T-cell (primary cell): ENCODE measurements at regions of chr4 and their contacts with region 1.

Region 1: DNA sequence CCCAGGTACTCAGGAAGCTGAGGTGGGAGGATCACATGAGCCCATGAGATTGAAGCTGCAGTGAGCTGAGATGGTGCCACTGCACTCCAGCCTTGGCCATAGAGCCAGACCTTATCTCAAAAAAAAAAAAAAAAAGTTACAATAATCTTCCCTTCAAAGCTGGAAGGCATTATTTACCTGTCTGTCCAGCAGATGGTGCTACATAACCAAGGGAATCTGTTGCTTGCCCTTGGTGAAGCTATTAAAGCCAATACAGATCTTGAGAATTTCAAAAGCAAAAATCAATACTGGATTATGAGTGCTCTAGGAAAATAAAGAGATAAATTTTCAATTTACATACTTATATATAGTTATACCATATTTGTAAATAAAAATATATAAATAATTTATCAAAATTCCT is 25.9 kb downstream of the PKD2 start:
- DNase-seq: peak in 19 of 35 experiments; percentile 4 to 70 (median 15)
- ATAC-seq: peak in 2 of 4 experiments; percentile 38
- H3K4me3 ChIP-seq: no peak overlapping the region
- H3K4me3 Mint-ChIP-seq: no peak overlapping the region
- H3K27ac ChIP-seq: no peak overlapping the region
- H3K27ac Mint-ChIP-seq: no peak overlapping the region
- H3K4me1 ChIP-seq: no peaks in the 10 kb centered on the region
- H3K4me1 Mint-ChIP-seq: no peaks in the 10 kb centered on the region
- H3K27me3 ChIP-seq: no peaks in the 10 kb centered on the region
- H3K27me3 Mint-ChIP-seq: no peaks in the 10 kb centered on the region

Region 2: GRCh38 chr4:87451537-87451936 is 581.8 kb before region 1 on chr4:
- CTCF ChIA-PET with region 1: interaction called in 1 of 2 experiments, 13 read pairs
- POLR2A ChIA-PET with region 1: no interaction called
- DNase-seq: peak in 1 of 35 experiments; percentile 5
- ATAC-seq: no peak
- H3K4me3 ChIP-seq: no peak overlapping the region
- H3K4me3 Mint-ChIP-seq: no peak overlapping the region
- H3K27ac ChIP-seq: no peak overlapping the region
- H3K27ac Mint-ChIP-seq: no peak overlapping the region
- H3K4me1 ChIP-seq: no peaks in the 10 kb centered on the region
- H3K4me1 Mint-ChIP-seq: peaks cover 0 to 7% (median 0%) of the 10 kb centered on the region in 3 donors
- H3K27me3 ChIP-seq: no peaks in the 10 kb centered on the region
- H3K27me3 Mint-ChIP-seq: no peaks in the 10 kb centered on the region

Region 3: DNA sequence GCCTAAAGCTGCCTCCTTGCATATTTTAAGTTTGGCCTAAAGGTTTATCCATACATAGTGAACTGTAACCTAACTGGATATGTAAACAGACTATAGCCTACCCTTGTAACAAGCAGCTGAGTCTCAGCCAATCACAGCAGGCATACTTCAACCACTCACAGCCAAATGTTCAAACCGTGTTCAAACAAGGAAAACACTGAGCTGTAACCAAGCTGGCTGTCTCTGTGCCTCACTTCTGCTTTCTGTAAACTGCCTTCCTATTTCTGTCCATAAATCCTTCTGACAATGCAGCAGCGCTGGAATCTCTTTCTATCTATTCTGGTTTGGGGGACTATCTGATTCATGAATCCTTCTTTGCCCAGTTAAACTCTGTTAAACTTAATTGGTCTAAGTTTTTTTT is 408.6 kb before region 1 on chr4:
- CTCF ChIA-PET with region 1: no interaction called
- POLR2A ChIA-PET with region 1: no interaction called
- DNase-seq: no peak
- ATAC-seq: no peak
- H3K4me3 ChIP-seq: no peak overlapping the region
- H3K4me3 Mint-ChIP-seq: no peak overlapping the region
- H3K27ac ChIP-seq: no peak overlapping the region
- H3K27ac Mint-ChIP-seq: no peak overlapping the region
- H3K4me1 ChIP-seq: no peaks in the 10 kb centered on the region
- H3K4me1 Mint-ChIP-seq: no peaks in the 10 kb centered on the region
- H3K27me3 ChIP-seq: no peaks in the 10 kb centered on the region
- H3K27me3 Mint-ChIP-seq: peaks cover 1 to 20% of the 10 kb centered on the region in 2 donors

Region 4: GRCh38 chr4:88007304-88008121 is 25.8 kb before region 1 on chr4 and contains the start of gene PKD2:
- CTCF ChIA-PET with region 1: no interaction called
- POLR2A ChIA-PET with region 1: no interaction called
- DNase-seq: peak; percentile 8 to 78 (median 52)
- ATAC-seq: peak; percentile 95
- H3K4me3 ChIP-seq: peak within 1 kb of the TSS; percentile 51 to 78
- H3K4me3 Mint-ChIP-seq: peak within 1 kb of the TSS; percentile 86 to 94 (median 94)
- H3K27ac ChIP-seq: no peak within 1 kb of the TSS
- H3K27ac Mint-ChIP-seq: peak within 1 kb of the TSS in 1 of 2 donors; percentile 29
- H3K4me1 ChIP-seq: peaks cover 2 to 10% of the 10 kb centered on the region in 2 experiments
- H3K4me1 Mint-ChIP-seq: peaks cover 29 to 32% (median 29%) of the 10 kb centered on the region in 3 donors
- H3K27me3 ChIP-seq: no peaks in the 10 kb centered on the region
- H3K27me3 Mint-ChIP-seq: peaks cover 0 to 13% of the 10 kb centered on the region in 2 donors
- total RNA-seq, gene PKD2: 6.8 to 17.4 (median 7.5) TPM